Cardiac septum (tissue), 1 donor: ENCODE measurements at regions of chr1 and their contacts with region 1.

Region 1: DNA sequence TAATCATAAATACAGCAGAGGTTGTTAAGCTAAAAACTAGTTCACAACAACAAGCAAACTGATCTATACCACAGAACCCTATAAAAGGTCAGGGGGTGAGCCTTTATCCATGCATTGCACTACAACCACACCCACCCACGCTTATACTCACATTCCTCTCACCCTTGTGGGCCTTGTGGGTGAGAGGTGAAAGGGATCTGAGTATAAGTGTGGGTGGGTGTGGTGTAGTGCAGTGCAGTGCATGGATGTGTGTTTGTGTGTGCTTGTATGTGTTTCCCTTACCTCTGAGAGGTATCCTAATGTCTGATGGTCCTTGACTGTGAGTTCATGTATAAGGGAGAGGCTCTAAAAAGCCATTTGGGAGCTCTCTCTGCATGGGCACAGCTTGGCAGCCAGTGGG is 95.4 kb upstream of the DPT start:
- DNase-seq: no peak

Region 2: GRCh38 chr1:168719306-168720111 is 104.9 kb before region 1 on chr1:
- intact Hi-C with region 1: loop called (anchors 5 kb)
- DNase-seq: no peak

Region 3: GRCh38 chr1:168774241-168774640 is 50.2 kb before region 1 on chr1:
- intact Hi-C with region 1: loop called (anchors 5 kb)
- DNase-seq: peak; percentile 80

Region 4: GRCh38 chr1:168879916-168880734 is 55.7 kb after region 1 on chr1:
- intact Hi-C with region 1: no loop called
- DNase-seq: no peak